IMR-90 (cell line): ENCODE measurements at regions of chr18 and their contacts with region 1.

Region 1: GRCh38 chr18:22399949-22400348 is 17.8 kb downstream of the CTAGE1 start:
- DNase-seq: peak; percentile 62
- ATAC-seq: peak; percentile 37; the same call in 1 of the 2 replicates
- H3K4me3 ChIP-seq: no peak overlapping the region
- H3K27ac ChIP-seq: no peak overlapping the region
- H3K4me1 ChIP-seq: no peaks in the 10 kb centered on the region
- H3K27me3 ChIP-seq: no peaks in the 10 kb centered on the region
- CTCF ChIP-seq: 0 out of 2 replicates have a peak, but pooled peaks have one; percentile 1
- POLR2A ChIP-seq: no peak
- RAD21 ChIP-seq: no peak

Region 2: GRCh38 chr18:22363867-22364463 is 36.0 kb before region 1 on chr18:
- CTCF ChIA-PET with region 1: no interaction called
- POLR2A ChIA-PET with region 1: no interaction called
- dilution Hi-C with region 1: no loop called
- in situ Hi-C with region 1: no loop called
- intact Hi-C with region 1: loop called (anchors 1 kb)
- DNase-seq: peak; percentile 29
- ATAC-seq: no peak
- H3K4me3 ChIP-seq: no peak overlapping the region
- H3K27ac ChIP-seq: no peak overlapping the region
- H3K4me1 ChIP-seq: no peaks in the 10 kb centered on the region
- H3K27me3 ChIP-seq: peaks cover 21% of the 10 kb centered on the region
- CTCF ChIP-seq: peak; percentile 30; the same call in 1 of the 2 replicates
- POLR2A ChIP-seq: no peak
- RAD21 ChIP-seq: peak; percentile 40